GM10248 (cell line): ENCODE measurements at regions of chr3 and their contacts with region 1.

Region 1: DNA sequence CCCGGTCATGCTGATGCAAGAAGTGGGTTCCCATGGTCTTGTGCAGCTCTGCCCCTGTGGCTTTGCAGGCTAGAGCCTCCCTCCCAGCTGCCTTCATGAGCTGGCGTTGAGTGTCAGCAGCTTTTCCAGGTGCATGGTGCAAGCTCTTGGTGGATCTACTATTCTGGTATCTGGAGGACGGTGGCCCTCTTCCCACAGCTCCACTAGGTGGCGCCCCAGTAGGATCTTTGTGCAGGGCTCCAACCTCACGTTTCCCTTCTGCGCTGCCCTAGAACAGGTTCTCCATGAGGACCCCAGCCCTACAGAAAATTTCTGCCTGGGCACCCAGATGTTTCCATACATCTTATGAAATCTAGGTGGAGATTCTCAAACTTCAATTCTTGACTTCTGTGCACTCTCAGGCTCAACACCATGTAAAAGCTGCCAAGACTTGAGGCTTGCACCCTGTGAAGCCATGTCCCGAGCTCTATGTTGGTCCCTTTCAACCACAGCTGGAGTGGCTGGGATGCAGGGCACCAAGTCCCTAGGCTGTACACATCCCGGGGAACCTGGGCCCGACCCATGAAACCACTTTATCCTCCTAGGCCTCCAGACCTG is 238.4 kb upstream of the MDFIC2 start:
- DNase-seq: peak; percentile 6
- CTCF ChIP-seq: peak; percentile 74

Region 2: GRCh38 chr3:70400194-70400593 is 150.6 kb before region 1 on chr3:
- CTCF ChIA-PET with region 1: no interaction called
- POLR2A ChIA-PET with region 1: no interaction called
- DNase-seq: no peak
- CTCF ChIP-seq: no peak

Region 3: DNA sequence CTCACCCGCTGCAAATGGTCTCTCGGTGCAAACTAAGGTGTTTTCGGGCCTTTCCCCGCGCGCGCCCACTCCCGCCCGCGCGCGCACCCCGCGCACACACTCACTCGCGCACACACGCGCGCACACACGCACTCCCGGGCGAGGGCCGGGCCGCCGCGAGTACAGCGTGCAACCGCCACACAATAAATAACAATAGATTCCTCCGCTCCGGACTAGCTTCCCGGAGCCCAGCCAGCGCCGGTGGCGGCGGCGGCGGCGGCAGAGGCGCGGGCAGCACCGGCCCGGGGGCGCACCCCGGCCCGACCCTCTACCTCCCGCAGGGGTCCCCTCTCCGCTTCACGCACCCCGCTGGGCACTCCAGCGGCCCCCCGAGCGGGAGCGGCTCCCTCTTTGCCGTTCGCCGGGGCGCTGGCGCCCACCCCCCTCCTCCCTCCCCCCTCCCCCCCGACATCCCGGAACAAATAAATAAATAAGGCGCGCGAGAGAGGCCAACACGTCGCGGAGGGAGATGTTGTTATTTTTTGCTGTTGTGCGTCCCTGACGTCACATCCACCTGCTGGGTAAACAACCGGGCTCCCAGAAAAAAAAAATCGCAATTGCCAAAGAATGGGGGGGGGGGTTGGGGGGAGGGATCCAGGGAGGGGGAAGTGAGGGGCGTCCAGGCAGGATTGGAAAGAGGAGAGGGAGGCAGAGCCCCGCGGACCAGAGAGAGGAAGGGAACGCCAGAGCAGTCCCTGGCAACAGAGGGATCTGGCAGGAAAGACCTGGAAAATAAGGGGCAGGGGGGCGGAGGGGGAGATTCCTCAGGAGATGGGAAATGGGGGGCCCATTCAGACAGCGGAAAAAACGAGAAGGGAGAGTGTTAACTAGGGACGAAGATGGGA is 1033.0 kb after region 1 on chr3 and contains the start of gene FOXP1:
- CTCF ChIA-PET with region 1: interaction called, 32 read pairs
- POLR2A ChIA-PET with region 1: no interaction called
- DNase-seq: peak; percentile 27
- CTCF ChIP-seq: no peak

Region 4: GRCh38 chr3:71652781-71653413 is 1102.1 kb after region 1 on chr3:
- CTCF ChIA-PET with region 1: interaction called, 12 read pairs
- POLR2A ChIA-PET with region 1: no interaction called
- DNase-seq: peak; percentile 43
- CTCF ChIP-seq: peak; percentile 44

Region 5: GRCh38 chr3:71681224-71681668 is 1130.4 kb after region 1 on chr3:
- CTCF ChIA-PET with region 1: interaction called, 19 read pairs
- POLR2A ChIA-PET with region 1: no interaction called
- DNase-seq: peak; percentile 29
- CTCF ChIP-seq: peak; percentile 52